Activated T-helper 1 cell treated with anti-CD3 and anti-CD28 coated beads, Interleukin-12 subunit alpha, Interleukin-12 subunit beta, Interleukin-2, Interleukin-4 antibody, amounts not matched to agents 30 ng/mL and 10 ng/mL and 1 ng/mL, durations not matched to agents 14 hours and 24 hours and 36 hours (primary cell): ENCODE measurements at regions of chr16 and their contacts with region 1.

Region 1: DNA sequence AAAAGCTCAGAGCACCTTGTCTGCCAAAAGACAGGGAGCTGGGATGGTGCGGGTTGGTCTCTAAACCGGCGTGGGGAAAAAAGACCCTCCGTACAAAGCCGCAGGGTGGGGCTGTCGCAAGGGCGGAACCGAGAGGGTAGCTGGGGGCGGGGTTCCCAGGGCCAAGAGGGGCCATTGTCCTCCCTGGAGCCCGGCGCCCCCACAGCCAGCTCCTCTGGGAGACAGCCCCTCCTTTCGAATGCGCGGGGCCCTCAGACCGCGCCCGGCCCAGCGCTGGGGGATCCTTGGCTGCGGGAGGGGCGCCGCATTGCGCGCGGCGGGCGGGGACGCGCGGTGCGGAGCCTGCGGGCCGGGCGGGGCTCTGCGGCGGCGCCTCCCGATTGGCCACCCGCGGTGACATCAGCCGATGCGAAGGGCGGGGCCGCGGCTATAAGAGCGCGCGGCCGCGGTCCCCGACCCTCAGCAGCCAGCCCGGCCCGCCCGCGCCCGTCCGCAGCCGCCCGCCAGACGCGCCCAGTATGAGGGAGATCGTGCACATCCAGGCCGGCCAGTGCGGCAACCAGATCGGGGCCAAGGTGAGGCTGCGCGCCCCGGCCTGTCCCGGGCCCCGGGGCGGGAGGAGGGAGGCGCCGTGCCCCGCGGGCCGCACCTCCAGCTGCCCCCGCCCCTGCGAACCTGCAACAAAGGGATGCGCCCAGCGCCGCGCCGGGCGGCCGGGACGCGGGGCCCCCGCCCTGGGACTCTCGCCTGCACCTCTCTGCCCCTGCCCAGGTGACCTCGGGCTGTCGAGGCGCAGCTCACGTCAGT is at the start of gene TUBB3:
- DNase-seq: peak; percentile 69
- H3K4me3 Mint-ChIP-seq: peak within 1 kb of the TSS; percentile 83
- H3K27ac Mint-ChIP-seq: peak within 1 kb of the TSS; percentile 15
- H3K4me1 Mint-ChIP-seq: peaks cover 7% of the 10 kb centered on the region
- H3K27me3 Mint-ChIP-seq: peaks cover 29% of the 10 kb centered on the region
- total RNA-seq, gene TUBB3: 2.0 and 2.6 TPM in 2 replicates

Region 2: DNA sequence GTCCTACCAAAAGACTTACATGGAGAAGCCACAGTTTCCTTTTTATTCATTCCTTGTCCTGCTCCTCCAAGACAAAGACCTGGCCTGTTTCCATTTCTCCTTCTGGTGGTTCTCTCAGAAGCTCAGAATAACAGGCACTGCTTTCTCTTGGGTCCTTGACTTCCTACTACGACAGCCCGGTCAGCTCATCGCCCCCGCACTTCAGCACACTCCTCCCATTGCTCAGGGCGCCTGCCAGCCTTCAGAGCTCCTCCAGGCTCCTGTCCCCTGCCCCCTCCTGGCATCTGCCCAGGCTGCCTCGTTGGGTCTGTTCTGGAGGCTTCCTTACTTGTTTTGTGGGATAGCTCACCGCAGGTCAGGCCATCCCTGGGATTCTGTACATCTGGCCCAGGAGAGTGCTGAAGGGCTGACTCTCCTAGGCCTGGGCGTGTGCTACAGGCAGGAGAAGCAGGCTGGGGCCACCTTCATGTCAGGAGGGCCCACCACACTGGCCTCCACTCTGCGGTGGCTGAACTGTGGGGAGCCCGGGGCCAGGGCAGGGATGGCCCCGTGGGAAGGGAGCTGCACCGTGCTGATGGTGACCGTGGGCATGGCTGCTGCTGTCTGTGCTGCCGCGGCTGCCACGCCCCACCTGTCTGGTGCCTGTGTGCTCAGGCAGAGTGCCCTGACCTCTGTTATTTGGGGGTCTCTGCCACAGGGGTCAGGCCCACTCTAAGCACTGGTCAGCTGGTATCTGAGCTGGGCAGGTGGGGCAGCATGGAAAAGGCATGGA is 32.0 kb before region 1 on chr16:
- intact Hi-C with region 1: loop called (anchors 1 kb)
- DNase-seq: no peak
- H3K4me3 Mint-ChIP-seq: no peak overlapping the region
- H3K27ac Mint-ChIP-seq: peak overlapping the region; percentile 12
- H3K4me1 Mint-ChIP-seq: peaks cover 8% of the 10 kb centered on the region
- H3K27me3 Mint-ChIP-seq: no peaks in the 10 kb centered on the region

Region 3: DNA sequence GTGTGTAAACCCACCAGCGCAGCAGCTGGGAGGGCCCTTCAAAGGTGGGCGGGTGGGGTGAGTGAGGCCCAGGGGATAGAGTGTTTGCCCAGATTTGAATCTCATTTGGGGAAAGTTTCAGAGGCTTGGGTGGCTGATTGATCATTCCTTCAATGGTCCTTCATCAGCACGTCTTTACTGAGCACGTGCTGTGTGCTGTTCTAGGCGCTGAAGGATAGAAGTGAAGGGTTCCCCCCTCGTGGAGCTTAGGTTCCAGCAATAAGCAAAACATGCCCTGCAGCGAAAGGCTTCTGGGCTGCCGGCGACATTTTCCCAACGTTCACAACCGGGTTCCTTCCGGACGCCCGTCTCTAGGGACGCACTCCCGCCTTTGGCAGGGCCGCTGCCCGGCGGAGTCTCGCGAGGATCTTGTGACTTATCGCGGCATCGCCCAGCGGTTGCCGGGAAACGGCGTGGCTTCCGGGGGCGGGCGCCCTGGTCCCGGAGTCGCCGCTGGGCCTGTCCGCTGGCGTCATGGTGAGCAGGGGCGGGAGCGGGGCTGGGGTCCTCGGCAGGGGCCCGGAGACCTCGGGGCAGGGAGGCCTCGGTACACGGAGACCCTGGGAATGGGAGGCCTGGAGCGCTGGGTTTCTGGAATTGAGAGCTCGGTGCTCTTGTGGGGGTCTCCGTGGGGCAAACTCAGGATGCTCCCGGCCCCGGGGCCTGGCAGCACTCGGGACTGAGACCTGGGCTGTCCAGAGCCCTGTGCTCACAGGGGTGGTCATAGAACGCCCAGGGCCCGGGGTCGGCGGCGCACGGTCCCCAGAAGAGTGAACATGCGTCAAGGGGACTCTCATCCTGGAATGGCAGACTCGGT is 99.3 kb after region 1 on chr16:
- intact Hi-C with region 1: loop called (anchors 10 kb)
- DNase-seq: peak; percentile 83
- H3K4me3 Mint-ChIP-seq: peak overlapping the region; percentile 76
- H3K27ac Mint-ChIP-seq: peak overlapping the region; percentile 55
- H3K4me1 Mint-ChIP-seq: peaks cover 17% of the 10 kb centered on the region
- H3K27me3 Mint-ChIP-seq: peaks cover 17% of the 10 kb centered on the region